Stomach (tissue), 19 donors: ENCODE measurements at regions of chr2 and their contacts with region 1.

Region 1: GRCh38 chr2:169824373-169825333 is at the start of gene METTL5:
- DNase-seq: peak; percentile 85 to 94
- H3K4me3 ChIP-seq: peak within 1 kb of the TSS; percentile 64 to 81 (median 72)
- H3K27ac ChIP-seq: peak within 1 kb of the TSS; percentile 77 to 87 (median 86)
- H3K4me1 ChIP-seq: peaks cover 24 to 75% (median 57%) of the 10 kb centered on the region in 4 donors
- H3K27me3 ChIP-seq: no peaks in the 10 kb centered on the region
- CTCF ChIP-seq: peak in 5 of 7 experiments; percentile 62 to 94 (median 91)
- EP300 ChIP-seq: no peak
- POLR2A ChIP-seq: no peak
- total RNA-seq, gene METTL5: 1.4 to 46.9 (median 36.0) TPM

Region 2: DNA sequence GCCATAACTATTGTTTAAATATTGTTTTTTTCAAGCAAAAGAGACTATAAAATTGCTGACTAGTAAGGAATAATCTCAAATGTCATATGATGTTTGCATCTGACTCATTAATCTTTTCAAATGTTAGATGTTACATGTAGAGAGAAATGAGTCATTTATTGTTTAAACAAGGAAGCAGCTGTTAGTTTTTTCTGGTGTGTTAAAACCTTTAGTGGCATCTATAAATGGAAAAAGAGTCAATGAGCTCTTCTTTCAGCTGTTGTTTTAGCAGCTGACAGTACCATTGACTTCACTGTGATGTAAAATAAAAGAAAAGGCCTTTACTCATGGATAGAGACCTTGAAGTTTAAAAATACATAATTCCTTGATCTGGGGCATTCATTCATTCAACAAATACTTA is 317.0 kb before region 1 on chr2:
- intact Hi-C with region 1: no loop called
- DNase-seq: peak in 1 of 2 donors; percentile 38
- H3K4me3 ChIP-seq: no peak overlapping the region
- H3K27ac ChIP-seq: peak overlapping the region in 1 of 5 donors; percentile 32
- H3K4me1 ChIP-seq: peaks cover 0 to 39% (median 6%) of the 10 kb centered on the region in 4 donors
- H3K27me3 ChIP-seq: no peaks in the 10 kb centered on the region
- CTCF ChIP-seq: no peak
- EP300 ChIP-seq: no peak
- POLR2A ChIP-seq: no peak

Region 3: DNA sequence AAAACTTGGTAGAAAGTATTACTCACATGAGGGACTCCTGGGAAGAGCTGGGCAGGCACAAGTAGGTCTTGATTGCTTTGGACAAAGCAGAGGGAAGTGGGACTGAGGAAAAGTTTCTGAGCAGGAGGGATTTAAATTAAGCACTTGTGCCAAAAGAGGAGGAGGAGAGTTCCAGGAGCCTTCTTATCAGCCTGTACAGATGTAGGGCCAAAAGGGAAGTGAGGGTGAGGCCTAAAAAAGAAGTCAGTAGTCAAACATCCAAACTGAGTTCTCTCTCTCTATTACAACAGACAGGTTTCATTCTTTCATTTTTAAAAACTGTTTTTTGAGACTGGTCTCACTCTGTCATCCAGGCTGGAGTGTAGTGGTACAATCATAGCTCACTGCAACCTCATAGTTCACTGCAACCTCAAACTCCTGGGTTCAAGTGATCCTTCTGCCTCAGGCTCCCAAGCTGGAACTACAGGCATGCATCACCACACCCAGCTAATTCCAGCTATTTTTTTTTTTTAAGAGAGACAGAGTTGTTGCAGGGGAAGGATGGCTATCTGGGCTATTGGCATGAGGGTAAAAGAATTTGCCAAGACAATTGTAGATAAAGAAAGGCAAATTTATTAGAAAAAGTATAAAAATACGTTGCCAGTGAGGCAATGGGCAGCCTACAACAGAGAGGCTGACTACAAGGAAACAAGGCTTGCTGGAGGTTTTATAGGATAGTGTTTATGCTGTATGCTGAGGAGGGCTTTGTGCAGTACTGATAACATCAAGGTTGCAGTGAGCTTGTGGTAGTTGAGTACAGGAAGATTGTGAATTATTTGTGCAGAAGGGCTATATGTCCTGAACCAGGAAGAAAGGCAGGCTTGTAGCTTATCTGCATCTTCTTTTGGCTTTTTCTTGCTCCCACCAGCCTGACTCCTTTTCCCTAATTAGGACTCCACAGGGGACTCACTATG is 159.4 kb before region 1 on chr2:
- intact Hi-C with region 1: no loop called
- DNase-seq: no peak
- H3K4me3 ChIP-seq: no peak overlapping the region
- H3K27ac ChIP-seq: no peak overlapping the region
- H3K4me1 ChIP-seq: peaks cover 0 to 17% (median 9%) of the 10 kb centered on the region in 4 donors
- H3K27me3 ChIP-seq: no peaks in the 10 kb centered on the region
- CTCF ChIP-seq: no peak
- EP300 ChIP-seq: no peak
- POLR2A ChIP-seq: no peak

Region 4: GRCh38 chr2:169928463-169928864 is 103.8 kb after region 1 on chr2:
- intact Hi-C with region 1: loop called (anchors 5 kb)
- DNase-seq: peak in 1 of 2 donors; percentile 60
- H3K4me3 ChIP-seq: no peak overlapping the region
- H3K27ac ChIP-seq: no peak overlapping the region
- H3K4me1 ChIP-seq: no peaks in the 10 kb centered on the region
- H3K27me3 ChIP-seq: no peaks in the 10 kb centered on the region
- CTCF ChIP-seq: peak in 5 of 7 experiments; percentile 49 to 79 (median 59)
- EP300 ChIP-seq: no peak
- POLR2A ChIP-seq: no peak